ENCODE measurements at regions of chr6 and their contacts with region 1.

Region 1: DNA sequence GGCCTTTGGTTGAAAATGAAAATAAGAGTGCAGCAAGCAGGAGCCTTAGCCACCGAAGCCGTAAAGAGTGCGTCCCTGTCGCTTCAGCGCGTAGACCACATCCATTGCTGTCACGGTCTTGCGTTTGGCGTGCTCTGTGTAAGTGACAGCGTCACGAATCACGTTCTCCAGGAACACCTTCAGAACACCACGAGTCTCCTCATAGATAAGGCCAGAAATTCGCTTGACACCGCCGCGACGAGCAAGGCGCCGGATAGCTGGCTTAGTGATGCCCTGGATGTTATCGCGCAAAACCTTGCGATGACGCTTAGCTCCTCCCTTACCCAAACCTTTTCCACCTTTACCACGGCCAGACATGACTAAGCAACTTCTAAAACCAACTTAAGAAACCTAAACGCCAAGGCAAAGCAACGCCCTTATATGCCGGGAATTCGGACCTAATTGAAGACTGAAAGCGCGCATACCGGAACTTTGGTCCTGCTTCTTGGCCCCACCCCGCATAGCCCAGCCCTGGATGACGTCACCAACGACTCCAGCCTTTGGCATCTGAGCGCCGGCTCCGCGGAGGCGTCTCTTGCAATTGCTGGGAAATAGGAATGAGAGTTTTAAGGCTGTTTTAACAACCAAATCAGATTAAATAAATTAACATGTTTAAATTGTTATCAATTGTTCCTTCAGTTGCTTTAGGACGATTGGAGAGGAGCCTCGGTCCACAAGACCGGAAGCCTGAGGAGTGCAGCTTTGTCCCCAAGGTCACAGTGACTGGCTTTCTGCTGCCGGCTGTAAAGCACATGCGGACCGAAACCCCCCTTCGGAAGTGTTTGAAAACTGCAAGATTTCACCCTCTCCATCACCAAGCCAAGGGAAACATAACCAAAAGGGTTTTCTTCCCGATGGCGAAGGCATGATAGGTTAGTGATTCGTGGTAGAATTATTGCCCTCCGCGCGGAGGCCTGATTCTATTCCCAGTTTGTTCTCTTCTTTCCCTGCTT is 79.6 kb upstream of the BTN3A2 start:
- DNase-seq: peak; percentile 99
- H3K4me3 ChIP-seq: peak overlapping the region; percentile 42 to 64 (median 56)
- H3K27ac ChIP-seq: peak overlapping the region; percentile 89 to 93 (median 92)
- H3K4me1 ChIP-seq: peaks cover 0 to 18% (median 16%) of the 10 kb centered on the region in 4 donors
- H3K27me3 ChIP-seq: no peaks in the 10 kb centered on the region
- CTCF ChIP-seq: no peak
- EP300 ChIP-seq: peak; percentile 47 to 85 (median 60)
- POLR2A ChIP-seq: peak; percentile 82 to 93

Region 2: GRCh38 chr6:26025894-26026832 is 259.3 kb before region 1 on chr6:
- intact Hi-C with region 1: loop called (anchors 10 kb)
- DNase-seq: peak; percentile 99
- H3K4me3 ChIP-seq: peak overlapping the region; percentile 53 to 76 (median 61)
- H3K27ac ChIP-seq: peak overlapping the region; percentile 90 to 99 (median 95)
- H3K4me1 ChIP-seq: peaks cover 0 to 31% (median 19%) of the 10 kb centered on the region in 4 donors
- H3K27me3 ChIP-seq: no peaks in the 10 kb centered on the region
- CTCF ChIP-seq: peak in 3 of 4 experiments; percentile 75 to 93 (median 77)
- EP300 ChIP-seq: peak in 2 of 4 donors; percentile 62 to 73
- POLR2A ChIP-seq: peak; percentile 46 to 53

Region 3: GRCh38 chr6:26175428-26176181 is 109.8 kb before region 1 on chr6:
- intact Hi-C with region 1: loop called (anchors 5 kb)
- DNase-seq: no peak
- H3K4me3 ChIP-seq: no peak overlapping the region
- H3K27ac ChIP-seq: peak overlapping the region in 2 of 4 donors; percentile 34 to 52
- H3K4me1 ChIP-seq: peaks cover 0 to 19% (median 5%) of the 10 kb centered on the region in 4 donors
- H3K27me3 ChIP-seq: no peaks in the 10 kb centered on the region
- CTCF ChIP-seq: peak in 3 of 4 experiments; percentile 45 to 67 (median 63)
- EP300 ChIP-seq: no peak
- POLR2A ChIP-seq: no peak

Region 4: GRCh38 chr6:26312501-26313390 is 27.3 kb after region 1 on chr6:
- intact Hi-C with region 1: loop called (anchors 2 kb)
- DNase-seq: peak; percentile 89
- H3K4me3 ChIP-seq: peak overlapping the region; percentile 10 to 51 (median 44)
- H3K27ac ChIP-seq: peak overlapping the region; percentile 47 to 60 (median 56)
- H3K4me1 ChIP-seq: peaks cover 0 to 11% (median 5%) of the 10 kb centered on the region in 4 donors
- H3K27me3 ChIP-seq: peaks cover 0 to 5% (median 0%) of the 10 kb centered on the region in 3 donors
- CTCF ChIP-seq: no peak
- EP300 ChIP-seq: no peak
- POLR2A ChIP-seq: no peak

Region 5: DNA sequence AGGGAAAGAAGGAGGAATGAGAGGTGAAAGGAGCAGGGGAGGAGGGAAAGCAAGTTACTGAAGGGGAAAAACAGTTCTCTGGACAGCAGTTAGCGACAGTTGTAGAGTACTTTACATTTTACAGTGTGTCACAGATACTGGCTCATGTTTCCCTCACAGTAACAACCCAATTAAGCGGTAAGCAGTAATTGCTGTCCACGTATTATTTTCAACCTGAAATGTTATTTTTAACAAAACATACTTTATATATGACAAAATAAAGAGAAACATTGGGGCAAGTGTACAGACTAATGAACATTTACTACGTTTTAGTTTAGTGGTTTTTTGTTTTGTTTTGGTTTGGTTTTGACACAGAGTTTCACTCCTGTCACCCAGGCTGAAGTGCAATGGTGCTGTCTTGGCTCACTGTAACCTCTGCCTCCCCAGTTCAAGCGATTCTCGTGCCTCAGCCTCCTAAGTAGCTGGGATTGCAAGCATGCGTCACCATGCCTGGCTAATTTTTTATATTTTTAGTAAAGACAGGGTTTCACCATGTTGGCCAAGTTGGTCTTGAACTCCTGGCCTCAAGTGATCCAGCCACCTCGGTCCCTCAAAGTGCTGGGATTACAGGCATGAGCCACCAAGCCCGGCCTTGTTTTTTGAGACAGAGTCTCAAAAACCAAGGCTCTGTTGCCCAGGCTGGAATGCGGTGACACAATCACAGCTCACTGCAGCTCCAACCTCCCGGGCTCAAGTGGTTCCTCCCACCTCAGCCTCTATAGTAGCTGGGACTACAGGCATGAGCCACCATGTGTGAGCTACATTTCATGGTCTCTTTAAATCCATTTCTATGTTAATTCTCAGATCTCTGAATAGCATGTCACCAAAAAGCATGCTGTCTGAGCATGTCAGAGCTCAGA is 56.9 kb after region 1 on chr6:
- intact Hi-C with region 1: no loop called
- DNase-seq: no peak
- H3K4me3 ChIP-seq: no peak overlapping the region
- H3K27ac ChIP-seq: no peak overlapping the region
- H3K4me1 ChIP-seq: peaks cover 0 to 4% (median 0%) of the 10 kb centered on the region in 4 donors
- H3K27me3 ChIP-seq: peaks cover 0 to 20% (median 3%) of the 10 kb centered on the region in 3 donors
- CTCF ChIP-seq: no peak
- EP300 ChIP-seq: no peak
- POLR2A ChIP-seq: no peak

Region 6: GRCh38 chr6:27146706-27147505 is 861.5 kb after region 1 on chr6:
- intact Hi-C with region 1: loop called (anchors 5 kb)
- DNase-seq: peak; percentile 92
- H3K4me3 ChIP-seq: peak overlapping the region; percentile 50 to 59 (median 56)
- H3K27ac ChIP-seq: peak overlapping the region; percentile 86 to 94 (median 91)
- H3K4me1 ChIP-seq: peaks cover 0 to 26% (median 20%) of the 10 kb centered on the region in 4 donors
- H3K27me3 ChIP-seq: no peaks in the 10 kb centered on the region
- CTCF ChIP-seq: no peak
- EP300 ChIP-seq: peak in 1 of 4 donors; percentile 20
- POLR2A ChIP-seq: peak; percentile 95 to 96